Sigmoid colon (tissue), 7 donors: ENCODE measurements at regions of chr17 and their contacts with region 1.

Region 1: DNA sequence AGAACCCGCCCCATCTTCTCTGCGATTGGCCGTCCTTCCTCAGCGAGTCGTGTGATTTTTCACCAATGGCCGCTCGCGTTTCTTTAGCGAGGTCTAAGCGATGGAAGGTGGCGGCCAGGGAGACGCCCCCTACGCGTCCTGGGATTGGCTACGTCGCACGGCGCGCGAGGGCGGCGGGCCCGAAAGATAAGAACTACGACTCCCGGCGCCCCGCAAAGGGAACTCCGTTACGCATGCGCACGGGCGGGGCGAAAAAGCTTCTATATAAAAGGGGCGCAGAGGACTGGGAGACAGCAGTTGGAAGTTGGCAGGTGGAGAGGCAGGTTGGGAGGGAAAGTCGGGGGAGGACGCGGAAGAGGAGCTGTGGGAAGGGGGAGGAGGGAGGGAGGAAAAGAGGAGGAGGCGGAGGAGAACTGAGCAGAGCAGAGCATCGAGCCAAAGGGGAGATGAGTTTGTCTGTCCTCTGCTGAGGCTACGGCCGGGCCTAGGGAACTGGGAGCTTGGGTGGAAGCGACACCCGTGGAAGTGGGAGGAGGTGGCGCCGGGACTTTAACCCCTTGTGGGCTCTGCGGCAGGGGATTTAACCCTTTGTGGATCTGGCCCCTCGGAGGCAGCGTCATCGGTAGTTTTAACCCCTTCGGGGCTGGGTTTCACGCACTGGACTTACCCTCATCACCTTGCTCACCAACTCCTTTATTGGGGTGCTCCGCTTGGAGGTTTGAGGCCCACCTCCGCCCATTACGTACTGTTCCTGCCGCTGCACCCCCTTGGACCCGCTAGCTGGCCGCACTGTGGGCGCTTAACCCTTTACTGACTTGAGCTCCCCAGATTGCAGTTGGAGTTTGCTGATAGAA is at the start of gene HEXIM1:
- DNase-seq: peak; percentile 100
- H3K4me3 ChIP-seq: peak within 1 kb of the TSS; percentile 81 to 92 (median 89)
- H3K27ac ChIP-seq: peak within 1 kb of the TSS; percentile 97 to 99 (median 98)
- H3K4me1 ChIP-seq: peaks cover 6 to 59% (median 50%) of the 10 kb centered on the region in 4 donors
- H3K27me3 ChIP-seq: no peaks in the 10 kb centered on the region
- CTCF ChIP-seq: no peak
- EP300 ChIP-seq: peak in 1 of 4 donors; percentile 68
- POLR2A ChIP-seq: peak; percentile 100
- total RNA-seq, gene HEXIM1: 41.0 to 60.9 (median 49.4) TPM

Region 2: GRCh38 chr17:44199553-44200477 is 948.6 kb before region 1 on chr17 and contains the start of gene ATXN7L3:
- intact Hi-C with region 1: loop called (anchors 10 kb)
- DNase-seq: peak; percentile 100
- H3K4me3 ChIP-seq: peak within 1 kb of the TSS; percentile 78 to 99 (median 94)
- H3K27ac ChIP-seq: peak within 1 kb of the TSS; percentile 97 to 99 (median 98)
- H3K4me1 ChIP-seq: peaks cover 0 to 36% (median 28%) of the 10 kb centered on the region in 4 donors
- H3K27me3 ChIP-seq: no peaks in the 10 kb centered on the region
- CTCF ChIP-seq: no peak
- EP300 ChIP-seq: no peak
- POLR2A ChIP-seq: no peak
- total RNA-seq, gene ATXN7L3: 26.4 to 37.4 (median 35.0) TPM

Region 3: DNA sequence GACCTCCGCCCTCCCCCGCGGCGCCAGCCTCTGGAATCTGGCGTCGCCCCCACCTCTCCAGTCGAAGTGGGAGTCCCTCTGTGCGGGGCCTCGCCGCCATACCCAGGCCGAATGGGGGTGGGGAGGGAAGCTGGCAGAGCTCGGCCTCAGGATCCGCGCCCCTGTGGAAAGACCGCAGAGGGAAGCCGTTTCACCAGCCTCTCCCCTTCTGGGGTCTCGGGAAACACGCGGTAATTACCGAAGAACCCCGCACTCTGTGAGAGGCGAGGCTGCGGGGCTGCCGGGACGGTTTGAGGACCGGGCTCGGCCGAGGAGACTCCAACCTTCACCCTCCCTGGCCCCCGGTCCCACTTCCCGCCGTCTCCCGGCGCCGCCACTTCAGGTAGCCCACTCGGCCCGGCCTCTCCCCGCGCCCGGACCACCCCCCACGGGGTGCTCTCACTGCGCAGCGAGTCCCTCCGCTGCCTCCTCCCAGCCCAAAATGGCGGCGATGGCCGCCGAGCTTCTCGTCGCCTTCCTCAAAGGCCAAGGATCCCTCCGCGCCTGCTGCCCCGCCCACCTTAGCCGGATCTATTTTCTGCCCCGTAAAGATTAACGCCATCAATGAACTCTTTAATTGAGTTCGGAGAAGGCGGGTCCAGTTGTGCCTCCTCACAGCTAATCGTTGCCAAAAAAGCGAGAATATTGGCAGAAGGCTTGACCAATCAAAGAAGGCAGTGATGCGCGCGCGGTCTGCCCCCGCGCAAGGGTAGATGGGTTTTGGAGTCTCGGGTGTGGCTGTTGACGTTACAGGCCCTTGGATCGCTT is 12.8 kb after region 1 on chr17:
- intact Hi-C with region 1: loop called (anchors 1 kb)
- DNase-seq: peak; percentile 99
- H3K4me3 ChIP-seq: peak overlapping the region; percentile 83 to 91 (median 88)
- H3K27ac ChIP-seq: peak overlapping the region; percentile 98 to 99 (median 99)
- H3K4me1 ChIP-seq: peaks cover 0 to 51% (median 45%) of the 10 kb centered on the region in 4 donors
- H3K27me3 ChIP-seq: no peaks in the 10 kb centered on the region
- CTCF ChIP-seq: no peak
- EP300 ChIP-seq: peak in 2 of 4 donors; percentile 2 to 56
- POLR2A ChIP-seq: peak; percentile 97

Region 4: GRCh38 chr17:45197555-45198334 is 49.3 kb after region 1 on chr17:
- intact Hi-C with region 1: loop called (anchors 1 kb)
- DNase-seq: peak; percentile 95
- H3K4me3 ChIP-seq: no peak overlapping the region
- H3K27ac ChIP-seq: peak overlapping the region; percentile 58 to 77 (median 70)
- H3K4me1 ChIP-seq: peaks cover 0 to 15% (median 11%) of the 10 kb centered on the region in 4 donors
- H3K27me3 ChIP-seq: no peaks in the 10 kb centered on the region
- CTCF ChIP-seq: peak; percentile 99
- EP300 ChIP-seq: no peak
- POLR2A ChIP-seq: no peak